Activated T-helper 1 cell treated with anti-CD3 and anti-CD28 coated beads, Interleukin-12 subunit alpha, Interleukin-12 subunit beta, Interleukin-2, Interleukin-4 antibody, amounts not matched to agents 30 ng/mL and 10 ng/mL and 1 ng/mL, durations not matched to agents 14 hours and 24 hours and 36 hours (primary cell): ENCODE measurements at regions of chr19 and their contacts with region 1.

Region 1: DNA sequence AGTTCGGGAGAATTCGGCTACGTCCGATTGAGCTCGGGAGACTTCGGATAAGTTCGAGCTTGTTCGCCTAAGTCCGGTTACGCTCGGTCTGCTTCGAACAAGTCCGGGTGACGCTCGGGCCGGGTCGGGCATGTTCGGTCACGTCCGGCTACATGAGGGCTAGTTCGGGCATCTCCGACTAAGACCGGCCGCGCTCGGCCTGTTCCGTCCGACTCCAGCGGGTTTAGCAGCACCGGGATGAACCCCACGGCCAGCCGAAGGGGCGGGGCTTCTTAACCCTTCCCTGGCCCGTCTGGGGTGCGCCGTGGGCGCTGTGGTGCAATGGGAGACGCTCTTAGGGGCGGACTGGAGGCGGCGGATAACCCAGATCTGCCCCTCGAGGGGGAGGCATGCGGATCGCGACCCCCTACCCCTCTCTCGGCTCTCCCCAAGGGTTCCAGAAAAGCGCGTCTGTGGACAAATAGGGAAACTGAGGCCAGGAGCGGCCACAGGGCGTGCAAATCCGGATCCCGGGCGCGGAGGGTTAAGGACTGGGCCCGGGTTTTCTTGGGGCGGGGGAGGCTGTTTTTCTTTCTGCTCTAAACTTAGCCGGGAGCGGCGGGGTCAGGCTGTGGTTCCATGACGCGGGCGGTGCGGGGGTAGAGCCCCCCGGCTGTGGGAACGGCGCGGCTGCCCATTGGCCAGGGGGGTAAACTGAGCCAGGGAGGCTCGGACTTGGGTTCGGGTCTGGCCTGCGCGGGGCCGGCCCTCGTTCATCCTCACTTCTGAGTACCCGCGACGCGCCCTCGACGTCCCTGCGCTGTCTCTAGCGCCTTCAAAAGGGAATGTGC is 1.5 kb downstream of the PDE4C start:
- DNase-seq: peak; percentile 86
- H3K4me3 Mint-ChIP-seq: peak overlapping the region; percentile 87
- H3K27ac Mint-ChIP-seq: peak overlapping the region; percentile 76
- H3K4me1 Mint-ChIP-seq: peaks cover 9% of the 10 kb centered on the region
- H3K27me3 Mint-ChIP-seq: peaks cover 52% of the 10 kb centered on the region

Region 2: DNA sequence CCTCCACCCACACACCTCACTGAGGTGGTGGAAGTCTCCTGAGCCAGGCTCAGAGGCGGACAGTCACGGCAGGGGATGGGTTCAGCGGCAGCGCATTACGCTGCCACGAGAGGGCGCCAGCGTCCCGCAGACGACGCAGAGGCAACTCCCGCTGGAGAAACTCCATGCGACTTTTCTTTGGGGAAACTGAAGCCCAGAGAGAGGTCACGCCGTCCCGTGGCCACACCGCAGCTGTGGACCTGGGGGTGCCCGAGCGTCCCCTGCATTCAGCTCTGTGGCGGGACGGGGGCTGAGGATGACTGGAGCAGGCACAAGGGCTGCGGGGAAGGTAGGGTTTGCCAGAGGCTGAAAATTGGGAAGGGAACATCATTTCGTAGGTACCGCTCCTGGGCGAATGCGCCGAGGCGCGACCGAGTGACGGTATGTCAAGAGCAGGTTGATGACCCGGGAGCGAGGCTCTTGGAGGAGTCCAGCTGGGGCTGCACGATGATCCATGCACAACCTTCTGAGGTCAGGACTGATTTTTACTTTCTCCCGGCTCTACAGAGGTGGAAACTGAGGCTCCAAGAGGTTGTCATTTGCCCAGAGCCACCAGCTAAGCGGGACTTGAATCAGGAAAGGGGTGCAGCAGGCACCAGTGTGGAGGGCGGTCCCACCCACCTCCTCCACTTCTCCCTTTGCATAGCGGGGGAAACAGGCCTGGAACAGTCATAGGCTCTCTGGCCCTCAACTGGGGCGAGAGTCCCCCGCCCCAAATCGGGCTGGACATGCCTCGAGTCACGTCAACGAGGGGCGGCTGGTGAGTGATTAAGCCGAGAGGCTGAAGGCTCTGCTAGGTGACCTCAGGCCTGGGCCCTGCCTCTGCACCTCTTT is 217.5 kb before region 1 on chr19:
- intact Hi-C with region 1: no loop called
- DNase-seq: peak; percentile 77
- H3K4me3 Mint-ChIP-seq: peak overlapping the region; percentile 93
- H3K27ac Mint-ChIP-seq: peak overlapping the region; percentile 93
- H3K4me1 Mint-ChIP-seq: peaks cover 47% of the 10 kb centered on the region
- H3K27me3 Mint-ChIP-seq: no peaks in the 10 kb centered on the region

Region 3: DNA sequence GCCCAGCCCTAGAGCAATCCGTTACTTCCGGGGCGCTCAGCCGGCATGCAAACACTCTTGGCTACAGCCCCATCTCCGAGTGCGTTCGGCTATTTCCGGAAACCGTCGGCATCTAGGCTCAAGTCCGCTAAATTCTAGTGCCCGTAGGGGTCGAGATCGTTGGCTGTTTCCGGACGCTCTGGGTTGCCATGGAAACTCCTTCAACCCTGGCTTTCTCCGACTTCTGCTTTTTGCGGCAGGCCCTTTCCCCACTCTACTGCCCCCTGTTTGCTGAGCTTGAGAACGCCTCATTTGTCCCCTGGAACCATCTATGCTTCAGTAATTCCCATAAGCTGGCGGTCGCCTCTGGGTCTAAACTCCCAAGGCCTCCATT is 72.3 kb before region 1 on chr19:
- intact Hi-C with region 1: loop called (anchors 1 kb)
- DNase-seq: peak; percentile 95
- H3K4me3 Mint-ChIP-seq: peak overlapping the region; percentile 84
- H3K27ac Mint-ChIP-seq: peak overlapping the region; percentile 96
- H3K4me1 Mint-ChIP-seq: peaks cover 23% of the 10 kb centered on the region
- H3K27me3 Mint-ChIP-seq: peaks cover 3% of the 10 kb centered on the region

Region 4: GRCh38 chr19:18251587-18252369 is 27.0 kb after region 1 on chr19:
- intact Hi-C with region 1: loop called (anchors 1 kb)
- DNase-seq: peak; percentile 66
- H3K4me3 Mint-ChIP-seq: no peak overlapping the region
- H3K27ac Mint-ChIP-seq: peak overlapping the region; percentile 18
- H3K4me1 Mint-ChIP-seq: no peaks in the 10 kb centered on the region
- H3K27me3 Mint-ChIP-seq: peaks cover 16% of the 10 kb centered on the region

Region 5: DNA sequence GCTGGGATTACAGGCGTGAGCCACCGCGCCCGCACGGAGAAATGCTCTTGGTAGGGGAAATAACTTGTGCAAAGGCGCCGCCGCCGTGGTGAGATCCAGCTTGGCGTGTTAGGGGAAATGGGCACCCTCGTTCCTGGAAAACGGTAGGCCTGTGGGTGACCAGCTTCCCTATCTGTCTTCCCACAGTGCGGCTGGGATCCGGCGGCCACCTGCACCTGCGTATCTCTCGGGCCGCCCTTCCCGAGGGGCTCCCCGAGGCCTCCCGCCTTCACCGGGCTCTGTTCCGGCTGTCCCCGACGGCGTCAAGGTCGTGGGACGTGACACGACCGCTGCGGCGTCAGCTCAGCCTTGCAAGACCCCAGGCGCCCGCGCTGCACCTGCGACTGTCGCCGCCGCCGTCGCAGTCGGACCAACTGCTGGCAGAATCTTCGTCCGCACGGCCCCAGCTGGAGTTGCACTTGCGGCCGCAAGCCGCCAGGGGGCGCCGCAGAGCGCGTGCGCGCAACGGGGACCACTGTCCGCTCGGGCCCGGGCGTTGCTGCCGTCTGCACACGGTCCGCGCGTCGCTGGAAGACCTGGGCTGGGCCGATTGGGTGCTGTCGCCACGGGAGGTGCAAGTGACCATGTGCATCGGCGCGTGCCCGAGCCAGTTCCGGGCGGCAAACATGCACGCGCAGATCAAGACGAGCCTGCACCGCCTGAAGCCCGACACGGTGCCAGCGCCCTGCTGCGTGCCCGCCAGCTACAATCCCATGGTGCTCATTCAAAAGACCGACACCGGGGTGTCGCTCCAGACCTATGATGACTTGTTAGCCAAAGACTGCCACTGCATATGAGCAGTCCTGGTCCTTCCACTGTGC is 163.6 kb after region 1 on chr19:
- intact Hi-C with region 1: loop called (anchors 5 kb)
- DNase-seq: peak; percentile 77
- H3K4me3 Mint-ChIP-seq: peak overlapping the region; percentile 61
- H3K27ac Mint-ChIP-seq: no peak overlapping the region
- H3K4me1 Mint-ChIP-seq: peaks cover 5% of the 10 kb centered on the region
- H3K27me3 Mint-ChIP-seq: peaks cover 57% of the 10 kb centered on the region

Region 6: GRCh38 chr19:18419195-18419698 is 194.5 kb after region 1 on chr19 and contains the start of gene SSBP4:
- intact Hi-C with region 1: loop called (anchors 5 kb)
- DNase-seq: peak; percentile 75
- H3K4me3 Mint-ChIP-seq: peak within 1 kb of the TSS; percentile 89
- H3K27ac Mint-ChIP-seq: peak within 1 kb of the TSS; percentile 82
- H3K4me1 Mint-ChIP-seq: peaks cover 78% of the 10 kb centered on the region
- H3K27me3 Mint-ChIP-seq: peaks cover 5% of the 10 kb centered on the region
- total RNA-seq, gene SSBP4: 135 and 141 TPM in 2 replicates